HCT116 (cell line): ENCODE measurements at regions of chr11 and their contacts with region 1.

Region 1: GRCh38 chr11:14300661-14301304 is 58.2 kb downstream of the RRAS2 start:
- DNase-seq: peak; percentile 42
- ATAC-seq: peak; percentile 97
- H3K4me3 ChIP-seq: no peak overlapping the region
- H3K27ac ChIP-seq: no peak overlapping the region
- H3K4me1 ChIP-seq: no peaks in the 10 kb centered on the region
- H3K27me3 ChIP-seq: no peaks in the 10 kb centered on the region
- CTCF ChIP-seq: peak; percentile 73 to 79 (median 77); a peak in 5 of 6 replicates
- POLR2A ChIP-seq: no peak
- RAD21 ChIP-seq: peak; percentile 88

Region 2: DNA sequence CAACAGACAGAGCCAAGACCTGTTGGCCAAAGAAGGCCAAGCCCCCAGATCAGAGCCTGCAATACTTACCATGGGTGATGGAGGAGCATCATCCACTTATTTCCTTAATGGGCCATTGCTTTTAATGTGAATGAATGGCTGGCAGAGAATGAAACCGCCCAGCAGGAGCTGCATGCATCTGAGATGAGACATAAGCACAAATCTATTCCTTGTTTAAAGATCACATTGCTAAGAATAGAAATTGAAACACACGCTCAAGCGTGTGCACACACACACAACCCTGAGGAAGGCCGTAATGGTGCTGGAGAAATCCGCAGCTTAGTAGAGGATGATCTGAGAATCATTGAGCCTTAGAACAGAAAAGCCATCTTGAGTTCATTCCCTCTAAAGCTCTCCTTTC is 63.5 kb after region 1 on chr11:
- CTCF ChIA-PET with region 1: no interaction called
- POLR2A ChIA-PET with region 1: no interaction called
- RAD21 ChIA-PET with region 1: no interaction called
- intact Hi-C with region 1: no loop called
- DNase-seq: no peak
- ATAC-seq: no peak
- H3K4me3 ChIP-seq: no peak overlapping the region
- H3K27ac ChIP-seq: no peak overlapping the region
- H3K4me1 ChIP-seq: peaks cover 2 to 6% of the 10 kb centered on the region in 2 experiments; a peak in 3 of 4 replicates
- H3K27me3 ChIP-seq: no peaks in the 10 kb centered on the region
- CTCF ChIP-seq: no peak
- POLR2A ChIP-seq: no peak
- RAD21 ChIP-seq: no peak

Region 3: GRCh38 chr11:14418803-14419417 is 118.1 kb after region 1 on chr11:
- CTCF ChIA-PET with region 1: interaction called, 60 read pairs
- POLR2A ChIA-PET with region 1: no interaction called
- RAD21 ChIA-PET with region 1: interaction called, 3 to 7 read pairs
- intact Hi-C with region 1: loop called (anchors 2 kb)
- DNase-seq: peak; percentile 48
- ATAC-seq: peak; percentile 77
- H3K4me3 ChIP-seq: no peak overlapping the region
- H3K27ac ChIP-seq: no peak overlapping the region
- H3K4me1 ChIP-seq: peaks cover 14 to 36% of the 10 kb centered on the region in 2 experiments
- H3K27me3 ChIP-seq: no peaks in the 10 kb centered on the region
- CTCF ChIP-seq: peak; percentile 66 to 75 (median 74); a peak in 5 of 6 replicates
- POLR2A ChIP-seq: no peak
- RAD21 ChIP-seq: peak; percentile 76

Region 4: DNA sequence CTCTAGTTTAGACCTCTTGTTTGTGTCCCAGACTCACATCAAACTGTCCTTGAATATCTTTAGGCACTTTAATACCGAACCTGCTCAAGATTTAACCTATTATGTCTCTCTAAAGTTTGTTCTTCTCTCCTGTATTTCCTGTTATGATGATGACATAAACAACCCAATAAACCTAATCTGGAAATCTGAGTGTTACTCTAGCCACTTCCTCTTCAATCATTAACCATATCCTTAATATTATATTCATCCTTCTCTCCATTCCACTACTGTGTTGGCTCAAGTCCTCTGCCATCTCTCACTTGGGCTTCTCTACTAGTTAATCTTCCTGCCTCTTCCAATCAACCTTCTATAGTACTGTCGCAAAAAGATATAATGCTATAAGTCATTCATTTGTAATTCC is 162.8 kb after region 1 on chr11:
- CTCF ChIA-PET with region 1: no interaction called
- POLR2A ChIA-PET with region 1: no interaction called
- RAD21 ChIA-PET with region 1: no interaction called
- intact Hi-C with region 1: no loop called
- DNase-seq: no peak
- ATAC-seq: no peak
- H3K4me3 ChIP-seq: no peak overlapping the region
- H3K27ac ChIP-seq: no peak overlapping the region
- H3K4me1 ChIP-seq: no peaks in the 10 kb centered on the region
- H3K27me3 ChIP-seq: no peaks in the 10 kb centered on the region
- CTCF ChIP-seq: no peak
- POLR2A ChIP-seq: no peak
- RAD21 ChIP-seq: no peak

Region 5: GRCh38 chr11:14578541-14578956 is 277.8 kb after region 1 on chr11:
- CTCF ChIA-PET with region 1: no interaction called
- POLR2A ChIA-PET with region 1: no interaction called
- RAD21 ChIA-PET with region 1: no interaction called
- intact Hi-C with region 1: no loop called
- DNase-seq: no peak
- ATAC-seq: no peak
- H3K4me3 ChIP-seq: no peak overlapping the region
- H3K27ac ChIP-seq: no peak overlapping the region
- H3K4me1 ChIP-seq: peaks cover 0 to 6% of the 10 kb centered on the region in 2 experiments; a peak in 1 of 4 replicates
- H3K27me3 ChIP-seq: no peaks in the 10 kb centered on the region
- CTCF ChIP-seq: no peak
- POLR2A ChIP-seq: no peak
- RAD21 ChIP-seq: no peak

Region 6: GRCh38 chr11:15295695-15296094 is 994.9 kb after region 1 on chr11:
- CTCF ChIA-PET with region 1: no interaction called
- POLR2A ChIA-PET with region 1: no interaction called
- RAD21 ChIA-PET with region 1: no interaction called
- intact Hi-C with region 1: no loop called
- DNase-seq: no peak
- ATAC-seq: no peak
- H3K4me3 ChIP-seq: no peak overlapping the region
- H3K27ac ChIP-seq: no peak overlapping the region
- H3K4me1 ChIP-seq: no peaks in the 10 kb centered on the region
- H3K27me3 ChIP-seq: peaks cover 60% of the 10 kb centered on the region
- CTCF ChIP-seq: no peak
- POLR2A ChIP-seq: no peak
- RAD21 ChIP-seq: no peak